Endothelial cell of umbilical vein (primary cell): ENCODE measurements at regions of chr10 and their contacts with region 1.

Region 1: GRCh38 chr10:102132563-102133372 is at the start of gene PPRC1:
- DNase-seq: peak; percentile 99
- H3K4me3 ChIP-seq: peak within 1 kb of the TSS; percentile 52 to 82 (median 62)
- H3K27ac ChIP-seq: peak within 1 kb of the TSS; percentile 73
- H3K4me1 ChIP-seq: peaks cover 20% of the 10 kb centered on the region
- H3K27me3 ChIP-seq: no peaks in the 10 kb centered on the region
- CTCF ChIP-seq: peak; percentile 90 to 97
- POLR2A ChIP-seq: peak; percentile 85
- total RNA-seq, gene PPRC1: 49.9 and 52.9 TPM in 2 replicates

Region 2: GRCh38 chr10:101818119-101818871 is 314.5 kb before region 1 on chr10 and contains the start of gene OGA:
- CTCF ChIA-PET with region 1: no interaction called
- POLR2A ChIA-PET with region 1: no interaction called
- dilution Hi-C with region 1: no loop called
- intact Hi-C with region 1: loop called (anchors 2 kb)
- DNase-seq: peak; percentile 100
- H3K4me3 ChIP-seq: peak within 1 kb of the TSS; percentile 82 to 99 (median 90)
- H3K27ac ChIP-seq: peak within 1 kb of the TSS; percentile 83
- H3K4me1 ChIP-seq: peaks cover 19% of the 10 kb centered on the region
- H3K27me3 ChIP-seq: no peaks in the 10 kb centered on the region
- CTCF ChIP-seq: no peak
- POLR2A ChIP-seq: peak; percentile 87
- total RNA-seq, gene OGA: 113 and 118 TPM in 2 replicates

Region 3: GRCh38 chr10:101986625-101986973 is 146.2 kb before region 1 on chr10:
- CTCF ChIA-PET with region 1: no interaction called
- POLR2A ChIA-PET with region 1: no interaction called
- dilution Hi-C with region 1: no loop called
- intact Hi-C with region 1: no loop called
- DNase-seq: peak; percentile 47
- H3K4me3 ChIP-seq: no peak overlapping the region
- H3K27ac ChIP-seq: no peak overlapping the region
- H3K4me1 ChIP-seq: peaks cover 7% of the 10 kb centered on the region
- H3K27me3 ChIP-seq: no peaks in the 10 kb centered on the region
- CTCF ChIP-seq: no peak
- POLR2A ChIP-seq: no peak

Region 4: DNA sequence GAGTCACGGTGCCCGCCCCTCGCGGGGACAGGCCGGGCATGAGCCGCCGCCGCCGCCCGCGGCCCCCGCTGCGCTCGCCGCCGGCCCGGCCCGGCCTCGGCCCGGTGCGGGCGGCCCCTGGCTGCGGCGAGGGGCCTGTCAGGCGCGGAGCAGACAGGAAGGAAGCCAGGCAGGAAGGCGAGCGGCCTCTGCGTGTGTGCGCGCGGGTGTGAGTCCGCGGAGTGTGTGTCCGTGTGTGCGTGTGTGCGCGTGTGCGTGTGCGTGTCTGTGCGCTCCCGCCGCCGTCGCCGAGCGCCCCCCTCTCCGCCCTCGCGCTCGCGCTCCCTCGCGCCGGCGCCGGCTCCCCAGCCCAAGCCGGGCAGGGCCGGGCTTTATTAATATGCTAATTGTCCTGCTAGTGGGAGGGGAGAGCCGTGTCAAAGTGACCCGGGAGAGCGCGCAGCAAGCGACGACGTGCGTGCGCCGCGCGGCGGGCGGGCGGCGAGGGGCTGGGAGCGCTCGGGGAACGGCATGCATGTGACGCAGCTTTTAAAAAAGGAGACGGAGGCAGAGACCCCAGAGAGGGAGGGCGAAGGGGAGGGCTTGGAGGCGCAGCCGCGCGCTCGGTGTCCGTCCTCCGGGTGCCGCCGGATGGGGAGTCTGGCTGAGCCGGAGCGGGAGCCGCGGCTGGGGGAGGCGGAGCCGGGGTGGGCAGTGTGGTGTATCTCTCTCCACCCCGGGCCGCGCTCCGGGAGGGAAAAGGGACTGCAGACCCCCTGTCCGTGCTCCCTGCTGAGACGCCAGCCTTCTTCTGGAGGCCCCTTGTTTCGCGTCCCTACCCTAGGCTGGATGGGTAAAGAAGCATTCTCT is 12.4 kb before region 1 on chr10 and contains the start of gene LDB1:
- CTCF ChIA-PET with region 1: interaction called, 10 read pairs
- POLR2A ChIA-PET with region 1: no interaction called
- dilution Hi-C with region 1: no loop called
- intact Hi-C with region 1: loop called (anchors 1 kb)
- DNase-seq: peak; percentile 88
- H3K4me3 ChIP-seq: peak within 1 kb of the TSS; percentile 53 to 98 (median 57)
- H3K27ac ChIP-seq: peak within 1 kb of the TSS; percentile 70
- H3K4me1 ChIP-seq: peaks cover 45% of the 10 kb centered on the region
- H3K27me3 ChIP-seq: no peaks in the 10 kb centered on the region
- CTCF ChIP-seq: no peak
- POLR2A ChIP-seq: no peak
- total RNA-seq, gene LDB1: 65.7 and 67.7 TPM in 2 replicates

Region 5: DNA sequence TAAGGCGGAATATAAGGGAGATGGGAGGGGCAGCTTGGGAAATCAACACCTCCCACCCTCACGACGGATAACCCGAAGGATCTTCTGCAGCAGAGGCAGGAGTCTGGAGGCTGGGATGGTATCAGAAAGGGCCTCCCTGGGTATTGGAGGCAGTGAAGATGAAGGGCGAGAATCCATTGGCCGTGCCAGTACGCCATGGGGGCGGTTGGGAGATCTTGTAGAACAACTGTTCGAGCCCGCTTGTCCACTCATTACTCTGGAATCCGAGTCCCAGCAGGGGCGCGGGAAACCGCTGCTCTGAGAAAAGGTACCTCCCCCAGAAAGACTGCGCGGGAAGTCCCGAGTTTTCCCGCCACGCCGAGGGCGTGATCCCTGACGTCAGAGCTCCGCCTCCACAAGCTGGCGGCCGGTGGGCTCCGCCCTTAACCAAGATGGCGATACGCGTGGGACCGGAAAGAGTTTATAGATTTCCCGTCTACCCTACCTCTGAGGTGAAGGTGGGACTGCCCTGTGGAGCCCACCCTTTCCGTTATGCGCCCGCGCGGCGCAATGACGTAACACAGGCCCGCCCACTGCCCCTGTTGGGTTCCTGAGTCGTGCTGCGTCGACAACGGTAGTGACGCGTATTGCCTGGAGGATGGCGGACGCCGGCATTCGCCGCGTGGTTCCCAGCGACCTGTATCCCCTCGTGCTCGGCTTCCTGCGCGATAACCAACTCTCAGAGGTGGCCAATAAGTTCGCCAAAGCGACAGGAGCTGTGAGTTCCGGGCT is 19.2 kb after region 1 on chr10 and contains the start of gene NOLC1:
- CTCF ChIA-PET with region 1: interaction called, 9 read pairs
- POLR2A ChIA-PET with region 1: interaction called, 3 read pairs
- dilution Hi-C with region 1: no loop called
- intact Hi-C with region 1: loop called (anchors 1 kb)
- DNase-seq: peak; percentile 99
- H3K4me3 ChIP-seq: peak within 1 kb of the TSS; percentile 24 to 71 (median 66)
- H3K27ac ChIP-seq: peak within 1 kb of the TSS; percentile 80
- H3K4me1 ChIP-seq: peaks cover 17% of the 10 kb centered on the region
- H3K27me3 ChIP-seq: no peaks in the 10 kb centered on the region
- CTCF ChIP-seq: no peak
- POLR2A ChIP-seq: peak; percentile 97
- total RNA-seq, gene NOLC1: 68.2 and 73.1 TPM in 2 replicates